Activated CD8-positive, alpha-beta T cell treated with anti-CD3 and anti-CD28 coated beads, Interleukin-2, amount 10 ng/mL, durations not matched to agents 7 days and 5 days (primary cell): ENCODE measurements at regions of chr12 and their contacts with region 1.

Region 1: DNA sequence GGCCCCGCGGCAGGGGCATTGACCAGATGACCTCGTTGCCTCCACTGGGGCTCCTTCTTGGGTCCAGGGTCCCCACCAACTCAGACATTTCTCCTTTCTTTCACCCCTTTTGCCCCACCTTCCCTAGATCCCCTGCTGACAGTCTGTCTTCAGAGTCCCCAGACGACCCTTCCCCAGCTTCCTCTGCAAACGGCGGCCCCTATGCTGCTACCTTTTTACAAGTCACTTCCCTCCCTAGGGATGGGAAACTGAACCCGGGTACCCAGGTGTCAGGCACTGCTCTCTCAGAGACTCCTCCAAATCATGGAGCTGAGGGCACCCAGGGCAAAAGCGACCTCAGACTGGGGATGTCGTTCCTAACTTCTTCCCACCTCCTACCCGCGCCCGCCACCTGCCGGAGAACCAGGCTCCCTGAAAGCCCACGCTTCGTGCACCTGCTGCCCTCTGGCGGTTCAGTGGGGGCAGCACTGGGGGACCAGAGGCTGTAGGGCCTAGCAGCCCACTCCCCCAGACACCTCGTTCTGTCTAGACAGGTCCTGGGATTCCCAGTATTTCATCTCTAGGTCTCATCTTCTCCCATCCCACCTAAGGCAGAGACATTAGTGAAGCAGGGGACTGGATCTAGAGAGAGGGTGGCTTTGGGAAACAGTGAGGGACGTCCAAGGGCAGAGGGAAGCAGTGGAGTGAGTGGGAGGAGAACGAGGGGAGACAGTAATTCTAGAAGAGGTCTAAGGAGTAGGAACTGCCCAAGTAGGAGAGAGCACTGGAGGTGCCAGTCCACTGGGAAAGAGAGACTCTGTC is 4.9 kb downstream of the ZNF385A start:
- DNase-seq: peak; percentile 93
- ATAC-seq: peak; percentile 95
- H3K4me3 Mint-ChIP-seq: peak overlapping the region; percentile 43
- H3K27ac Mint-ChIP-seq: no peak overlapping the region
- H3K4me1 Mint-ChIP-seq: peaks cover 12% of the 10 kb centered on the region
- H3K27me3 Mint-ChIP-seq: no peaks in the 10 kb centered on the region

Region 2: DNA sequence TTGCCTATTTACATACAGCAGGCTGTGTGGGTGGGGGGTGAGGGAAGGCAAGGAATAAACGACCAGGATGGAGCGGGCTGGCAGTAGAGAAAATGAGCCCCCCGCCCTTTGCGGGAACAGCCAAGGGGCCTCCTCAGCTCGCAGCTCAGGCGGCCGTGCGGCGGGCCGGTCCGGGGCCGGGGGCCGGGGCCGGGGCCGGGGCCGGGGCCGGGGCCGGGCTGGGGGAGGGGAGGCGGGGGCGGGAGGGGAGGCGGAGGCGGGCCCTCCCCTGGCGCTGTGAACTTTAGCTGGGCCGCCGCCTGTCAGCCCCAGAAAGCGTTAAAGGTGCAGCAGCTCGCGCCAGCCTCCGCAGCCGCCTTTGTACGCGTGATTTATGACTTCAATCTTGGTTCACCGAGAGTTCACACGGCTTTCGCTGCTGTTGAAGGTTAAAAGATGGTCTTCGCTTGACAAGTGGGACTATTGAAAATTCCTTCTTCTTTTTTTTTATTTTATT is 297.2 kb before region 1 on chr12:
- CTCF ChIA-PET with region 1: no interaction called
- POLR2A ChIA-PET with region 1: no interaction called
- DNase-seq: peak; percentile 66
- ATAC-seq: peak; percentile 44
- H3K4me3 Mint-ChIP-seq: peak overlapping the region; percentile 85
- H3K27ac Mint-ChIP-seq: peak overlapping the region; percentile 90
- H3K4me1 Mint-ChIP-seq: peaks cover 29% of the 10 kb centered on the region
- H3K27me3 Mint-ChIP-seq: peaks cover 7% of the 10 kb centered on the region

Region 3: DNA sequence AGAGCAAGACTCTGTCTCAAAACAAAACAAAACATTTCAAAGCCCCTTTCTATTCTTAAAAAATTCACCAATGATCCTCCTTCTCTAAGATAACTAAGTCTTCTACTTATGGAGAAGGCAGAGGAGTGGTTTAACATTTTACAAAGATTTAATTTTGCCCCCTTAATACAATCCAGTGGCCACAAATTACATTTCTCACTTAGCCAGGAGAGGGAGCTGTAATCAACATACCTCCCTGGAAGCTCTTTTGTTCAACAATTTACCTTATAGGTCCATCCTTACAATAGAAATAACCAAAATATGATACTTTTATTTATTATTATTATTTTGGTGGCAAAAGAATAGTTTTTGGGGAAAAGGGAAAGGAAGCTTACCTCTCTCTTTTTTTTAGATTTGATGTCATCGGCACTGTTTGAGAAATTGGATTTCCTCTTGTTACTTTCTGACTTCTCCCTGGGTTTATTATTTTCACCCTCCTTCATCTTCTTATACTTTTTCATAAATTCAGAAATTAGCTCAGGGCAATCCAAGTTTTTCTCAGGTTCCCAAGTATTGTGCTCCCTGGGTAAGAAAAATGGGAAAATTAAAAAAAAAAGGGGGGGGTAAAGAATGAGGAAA is 127.8 kb before region 1 on chr12:
- CTCF ChIA-PET with region 1: interaction called, 16 read pairs
- POLR2A ChIA-PET with region 1: no interaction called
- DNase-seq: peak; percentile 31
- ATAC-seq: peak; percentile 53
- H3K4me3 Mint-ChIP-seq: no peak overlapping the region
- H3K27ac Mint-ChIP-seq: no peak overlapping the region
- H3K4me1 Mint-ChIP-seq: no peaks in the 10 kb centered on the region
- H3K27me3 Mint-ChIP-seq: no peaks in the 10 kb centered on the region

Region 4: DNA sequence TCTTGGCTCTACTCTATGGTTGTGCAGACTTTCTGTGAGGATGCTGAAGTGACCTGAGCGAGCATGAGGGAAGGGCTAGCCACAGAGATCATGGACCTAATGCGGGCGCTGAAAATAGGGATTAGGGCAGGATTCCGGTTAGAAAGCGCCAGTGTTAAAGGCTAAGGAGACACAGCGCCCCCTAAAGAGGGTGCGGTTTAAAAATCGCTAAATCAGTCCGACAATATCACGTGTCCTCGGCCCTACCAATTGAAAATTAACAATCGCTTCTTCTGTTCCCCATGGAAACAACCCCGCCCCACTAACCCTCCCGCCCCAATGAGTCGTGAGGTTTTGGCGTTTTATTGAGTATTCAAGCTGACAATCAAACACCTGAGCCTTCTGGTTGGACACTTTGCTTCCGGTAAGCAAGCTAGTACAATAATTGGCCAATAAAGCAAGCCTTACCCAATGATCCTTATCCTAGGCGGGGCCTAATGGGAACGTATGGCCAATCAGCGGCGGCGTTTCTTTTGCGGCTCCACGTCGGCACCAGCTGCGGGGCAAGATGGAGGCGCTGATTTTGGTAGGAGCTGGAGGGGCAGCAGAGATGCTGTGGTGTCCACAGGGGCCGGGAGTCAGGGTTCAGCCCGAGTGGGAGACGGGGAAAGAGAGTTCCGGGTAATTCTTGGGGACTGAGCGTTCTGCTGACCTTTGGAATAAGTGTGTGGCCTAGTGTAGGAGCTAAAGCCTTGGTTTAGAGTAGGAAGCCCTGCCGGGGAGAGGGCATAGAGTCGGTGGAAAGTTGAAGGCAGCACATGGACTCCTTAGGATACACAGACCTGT is 54.8 kb before region 1 on chr12 and contains the start of gene COPZ1:
- CTCF ChIA-PET with region 1: interaction called, 23 read pairs
- POLR2A ChIA-PET with region 1: no interaction called
- DNase-seq: peak; percentile 98
- ATAC-seq: peak; percentile 99
- H3K4me3 Mint-ChIP-seq: peak within 1 kb of the TSS; percentile 97
- H3K27ac Mint-ChIP-seq: peak within 1 kb of the TSS; percentile 92
- H3K4me1 Mint-ChIP-seq: peaks cover 38% of the 10 kb centered on the region
- H3K27me3 Mint-ChIP-seq: no peaks in the 10 kb centered on the region
- total RNA-seq, gene COPZ1: 105 to 112 TPM

Region 5: DNA sequence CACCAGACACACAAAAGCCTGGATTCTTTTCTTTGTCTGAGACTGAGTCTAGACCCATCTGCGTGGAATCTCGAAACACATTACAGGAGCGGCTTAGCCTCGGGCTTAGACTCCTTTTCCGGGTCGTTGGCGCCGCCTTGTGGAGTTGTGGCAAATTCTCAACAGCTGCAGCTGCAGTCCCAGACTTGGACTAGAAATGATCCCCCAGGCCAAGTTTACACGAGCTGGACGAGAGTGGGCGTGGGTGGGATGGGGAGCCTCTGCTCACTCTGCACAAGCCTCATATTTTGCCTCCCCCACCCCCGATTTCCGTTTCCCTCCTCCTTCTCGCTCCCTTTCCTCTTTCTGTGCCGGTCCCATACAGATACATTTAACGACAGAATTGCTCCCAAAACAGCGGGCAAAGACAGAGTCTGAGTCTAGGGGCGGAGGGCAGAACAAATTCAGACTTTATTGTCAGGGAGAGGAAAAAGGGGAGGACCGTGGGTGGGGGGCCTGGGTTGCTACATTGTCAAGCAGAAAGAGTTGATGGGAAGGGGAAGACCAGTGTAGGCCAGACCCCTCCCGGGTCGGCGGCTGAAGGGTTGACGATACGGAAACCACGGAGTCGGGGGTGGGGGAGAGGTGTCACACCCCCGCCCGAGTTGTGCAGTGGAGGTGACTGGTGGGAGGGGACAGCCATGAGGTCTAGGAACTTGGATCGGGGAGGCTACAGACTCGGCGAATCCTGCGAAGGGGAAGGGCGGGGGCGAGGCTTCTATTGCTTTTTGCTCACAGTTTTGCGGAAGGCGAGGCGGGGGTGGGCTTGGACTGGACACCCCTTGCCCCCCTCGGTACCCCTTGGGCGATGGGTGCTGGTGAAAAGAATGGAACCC is 10.7 kb before region 1 on chr12:
- CTCF ChIA-PET with region 1: interaction called, 26 read pairs
- POLR2A ChIA-PET with region 1: no interaction called
- DNase-seq: peak; percentile 93
- ATAC-seq: peak; percentile 89
- H3K4me3 Mint-ChIP-seq: no peak overlapping the region
- H3K27ac Mint-ChIP-seq: peak overlapping the region; percentile 32
- H3K4me1 Mint-ChIP-seq: peaks cover 52% of the 10 kb centered on the region
- H3K27me3 Mint-ChIP-seq: peaks cover 4% of the 10 kb centered on the region

Region 6: GRCh38 chr12:54411391-54412241 is 32.0 kb after region 1 on chr12:
- CTCF ChIA-PET with region 1: interaction called, 14 read pairs
- POLR2A ChIA-PET with region 1: no interaction called
- DNase-seq: peak; percentile 56
- ATAC-seq: peak; percentile 16
- H3K4me3 Mint-ChIP-seq: peak overlapping the region; percentile 54
- H3K27ac Mint-ChIP-seq: peak overlapping the region; percentile 89
- H3K4me1 Mint-ChIP-seq: peaks cover 56% of the 10 kb centered on the region
- H3K27me3 Mint-ChIP-seq: no peaks in the 10 kb centered on the region